Left ventricle myocardium inferior (tissue), 1 donor: ENCODE measurements at regions of chr14 and their contacts with region 1.

Region 1: DNA sequence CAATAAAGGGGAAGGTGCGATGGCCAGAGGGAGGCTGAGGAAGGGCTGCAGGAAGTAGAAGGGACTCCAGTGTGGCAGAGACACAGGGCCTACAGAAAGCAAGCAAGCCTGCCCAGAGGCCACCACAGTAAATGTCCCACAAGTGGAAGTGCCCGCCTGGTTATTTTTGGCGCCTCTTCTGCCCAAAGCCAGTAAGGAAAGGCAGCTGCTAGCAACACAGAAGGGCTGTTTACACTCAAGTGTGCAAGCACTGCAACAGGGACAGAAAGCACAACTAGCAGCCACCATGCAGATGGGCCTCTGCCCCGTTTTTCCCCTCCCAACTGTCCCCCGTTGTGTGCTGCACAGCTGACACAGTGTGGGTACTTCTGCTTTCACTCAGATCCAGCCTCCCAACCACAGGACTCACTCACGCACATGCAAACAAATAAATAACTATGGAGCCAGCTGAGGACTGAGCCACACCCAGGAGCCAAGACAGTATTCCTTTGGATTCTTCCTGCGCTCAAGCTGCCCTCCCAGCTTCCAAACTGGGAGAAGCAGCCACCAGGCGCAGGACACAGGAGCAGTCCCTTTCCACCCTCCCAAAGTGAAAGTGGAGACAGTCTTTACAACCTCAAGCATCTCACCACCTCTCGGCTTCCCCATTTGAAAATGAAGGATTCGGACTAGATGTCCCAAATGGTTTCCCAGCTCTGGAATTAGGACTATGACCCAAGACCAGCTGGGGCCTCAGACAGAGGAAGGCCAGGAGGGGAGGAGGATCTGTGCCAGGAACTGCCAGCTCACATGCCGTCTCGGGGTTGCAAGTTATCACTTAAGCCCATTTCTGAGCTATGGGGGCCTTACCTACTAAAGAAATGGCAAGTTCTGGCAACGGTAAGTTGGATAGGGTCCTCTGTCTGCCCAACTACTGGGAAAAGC is 40.0 kb upstream of the PNMA1 start:
- DNase-seq: no peak
- H3K4me3 ChIP-seq: peak overlapping the region; percentile 51
- H3K27ac ChIP-seq: peak overlapping the region; percentile 100
- H3K4me1 ChIP-seq: peaks cover 100% of the 10 kb centered on the region
- H3K27me3 ChIP-seq: no peaks in the 10 kb centered on the region
- CTCF ChIP-seq: no peak

Region 2: GRCh38 chr14:73785873-73786695 is 31.9 kb after region 1 on chr14:
- intact Hi-C with region 1: loop called (anchors 5 kb)
- DNase-seq: peak; percentile 70
- H3K4me3 ChIP-seq: peak overlapping the region; percentile 80
- H3K27ac ChIP-seq: peak overlapping the region; percentile 99
- H3K4me1 ChIP-seq: peaks cover 91% of the 10 kb centered on the region
- H3K27me3 ChIP-seq: no peaks in the 10 kb centered on the region
- CTCF ChIP-seq: peak; percentile 53